ENCODE measurements at regions of chr1 and their contacts with region 1.

Region 1: DNA sequence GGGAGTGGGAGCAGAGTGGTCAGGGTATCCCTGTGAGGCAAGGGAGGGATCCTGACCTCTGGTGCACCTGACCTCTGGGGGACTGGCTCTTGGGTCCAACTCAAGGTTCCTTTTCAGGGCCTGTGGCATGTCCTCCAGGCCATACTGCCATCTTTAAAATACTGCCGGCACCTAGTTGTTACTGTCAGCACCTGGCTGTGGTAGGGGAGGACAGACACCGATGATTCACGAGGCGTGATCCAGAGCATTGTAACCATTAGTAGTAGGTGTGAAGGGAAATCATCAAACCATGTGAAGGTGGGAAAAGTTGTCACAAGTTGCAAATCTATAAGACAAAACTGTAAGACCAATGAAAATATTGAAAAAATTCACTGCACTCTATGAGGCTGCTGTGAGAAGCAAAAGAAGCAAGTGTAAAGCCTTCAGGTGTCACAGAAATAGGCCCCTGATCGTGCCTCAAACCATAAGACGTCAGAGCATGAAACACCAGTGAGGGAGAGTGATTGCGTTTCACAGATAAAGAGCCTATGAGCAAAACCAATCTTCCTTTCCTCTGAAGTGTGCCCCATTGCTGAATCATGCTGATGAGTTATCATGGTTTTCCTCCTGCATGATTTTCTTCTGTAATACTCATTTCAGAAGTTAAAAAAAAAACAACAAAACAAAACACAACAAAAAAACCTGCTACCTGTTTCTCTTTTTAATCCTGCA is 55.3 kb downstream of the CDC7 start:
- DNase-seq: peak; percentile 78
- ATAC-seq: peak; percentile 88
- H3K4me3 Mint-ChIP-seq: peak overlapping the region; percentile 60
- H3K27ac Mint-ChIP-seq: peak overlapping the region; percentile 97
- H3K4me1 Mint-ChIP-seq: peaks cover 83% of the 10 kb centered on the region
- H3K27me3 Mint-ChIP-seq: no peaks in the 10 kb centered on the region

Region 2: GRCh38 chr1:91021686-91022517 is 534.1 kb before region 1 on chr1 and contains the start of gene ZNF644:
- CTCF ChIA-PET with region 1: no interaction called
- POLR2A ChIA-PET with region 1: no interaction called
- intact Hi-C with region 1: loop called in 1 of 2 experiments (anchors 5 kb)
- DNase-seq: peak; percentile 95
- ATAC-seq: peak; percentile 90
- H3K4me3 Mint-ChIP-seq: peak within 1 kb of the TSS; percentile 94
- H3K27ac Mint-ChIP-seq: peak within 1 kb of the TSS; percentile 97
- H3K4me1 Mint-ChIP-seq: peaks cover 62% of the 10 kb centered on the region
- H3K27me3 Mint-ChIP-seq: no peaks in the 10 kb centered on the region
- total RNA-seq, gene ZNF644: 36.8 to 46.0 TPM

Region 3: DNA sequence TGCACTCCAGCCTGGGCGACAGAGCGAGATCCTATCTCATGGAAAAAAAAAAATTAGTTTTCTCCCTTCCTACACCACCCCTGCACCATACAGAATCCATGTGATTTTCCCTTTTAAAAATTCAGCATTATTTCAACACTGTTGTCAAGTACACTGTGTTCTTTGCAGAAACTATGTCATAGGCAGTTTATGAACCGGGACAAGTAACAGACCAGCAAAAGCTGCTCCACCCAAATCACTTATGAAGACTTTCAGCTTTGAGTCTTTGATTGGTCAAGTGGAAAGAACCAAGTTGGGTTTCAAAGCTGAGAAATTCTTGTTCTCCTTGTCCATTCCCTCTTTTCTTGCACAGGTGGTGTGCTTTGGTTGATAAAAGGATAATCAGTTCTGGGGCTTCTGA is 117.6 kb after region 1 on chr1:
- CTCF ChIA-PET with region 1: no interaction called
- POLR2A ChIA-PET with region 1: interaction called, 4 read pairs
- intact Hi-C with region 1: loop called (anchors 1 to 2 kb)
- DNase-seq: no peak
- ATAC-seq: no peak
- H3K4me3 Mint-ChIP-seq: no peak overlapping the region
- H3K27ac Mint-ChIP-seq: peak overlapping the region; percentile 84
- H3K4me1 Mint-ChIP-seq: peaks cover 34% of the 10 kb centered on the region
- H3K27me3 Mint-ChIP-seq: no peaks in the 10 kb centered on the region

Region 4: DNA sequence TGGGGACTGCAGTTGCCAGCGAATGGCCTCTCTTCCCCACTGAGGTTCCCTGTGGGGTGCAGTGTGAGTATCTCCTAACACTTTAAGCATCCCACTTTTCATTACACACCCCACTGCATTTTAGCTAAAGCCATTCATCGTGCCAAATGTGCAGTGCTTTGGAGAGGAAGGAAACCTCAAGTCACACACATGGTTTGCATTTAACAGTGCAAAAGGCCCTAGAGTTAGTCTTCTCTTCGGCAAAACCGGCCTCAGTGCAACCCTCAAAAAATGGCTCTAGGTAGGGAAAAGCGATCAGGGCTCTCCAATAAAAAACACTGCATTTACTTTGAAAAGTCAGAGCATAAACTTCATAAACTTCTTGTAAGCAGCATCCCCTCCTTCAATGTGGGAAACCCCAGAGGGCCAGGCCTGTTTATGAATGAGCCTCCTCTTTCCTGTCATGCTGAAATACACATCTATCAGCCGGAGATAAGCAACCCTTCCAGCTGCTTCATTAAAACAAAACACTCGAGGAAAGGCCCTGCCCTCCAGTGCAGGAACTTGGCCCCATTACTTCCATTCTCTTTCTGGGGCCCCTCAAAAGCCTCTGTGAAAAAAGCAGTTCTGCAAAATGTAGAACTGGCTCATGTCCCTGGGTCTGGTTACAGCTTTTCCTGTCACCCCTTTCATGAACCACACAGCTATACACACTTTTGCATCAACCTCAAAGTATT is 128.7 kb after region 1 on chr1:
- CTCF ChIA-PET with region 1: no interaction called
- POLR2A ChIA-PET with region 1: no interaction called
- intact Hi-C with region 1: no loop called
- DNase-seq: peak; percentile 37
- ATAC-seq: peak; percentile 79
- H3K4me3 Mint-ChIP-seq: no peak overlapping the region
- H3K27ac Mint-ChIP-seq: peak overlapping the region; percentile 72
- H3K4me1 Mint-ChIP-seq: peaks cover 25% of the 10 kb centered on the region
- H3K27me3 Mint-ChIP-seq: no peaks in the 10 kb centered on the region

Region 5: GRCh38 chr1:91732291-91733107 is 176.5 kb after region 1 on chr1:
- CTCF ChIA-PET with region 1: interaction called, 4 read pairs
- POLR2A ChIA-PET with region 1: no interaction called
- intact Hi-C with region 1: loop called (anchors 1 to 5 kb)
- DNase-seq: peak; percentile 58
- ATAC-seq: peak; percentile 47
- H3K4me3 Mint-ChIP-seq: no peak overlapping the region
- H3K27ac Mint-ChIP-seq: peak overlapping the region; percentile 89
- H3K4me1 Mint-ChIP-seq: peaks cover 48% of the 10 kb centered on the region
- H3K27me3 Mint-ChIP-seq: peaks cover 5% of the 10 kb centered on the region

Region 6: DNA sequence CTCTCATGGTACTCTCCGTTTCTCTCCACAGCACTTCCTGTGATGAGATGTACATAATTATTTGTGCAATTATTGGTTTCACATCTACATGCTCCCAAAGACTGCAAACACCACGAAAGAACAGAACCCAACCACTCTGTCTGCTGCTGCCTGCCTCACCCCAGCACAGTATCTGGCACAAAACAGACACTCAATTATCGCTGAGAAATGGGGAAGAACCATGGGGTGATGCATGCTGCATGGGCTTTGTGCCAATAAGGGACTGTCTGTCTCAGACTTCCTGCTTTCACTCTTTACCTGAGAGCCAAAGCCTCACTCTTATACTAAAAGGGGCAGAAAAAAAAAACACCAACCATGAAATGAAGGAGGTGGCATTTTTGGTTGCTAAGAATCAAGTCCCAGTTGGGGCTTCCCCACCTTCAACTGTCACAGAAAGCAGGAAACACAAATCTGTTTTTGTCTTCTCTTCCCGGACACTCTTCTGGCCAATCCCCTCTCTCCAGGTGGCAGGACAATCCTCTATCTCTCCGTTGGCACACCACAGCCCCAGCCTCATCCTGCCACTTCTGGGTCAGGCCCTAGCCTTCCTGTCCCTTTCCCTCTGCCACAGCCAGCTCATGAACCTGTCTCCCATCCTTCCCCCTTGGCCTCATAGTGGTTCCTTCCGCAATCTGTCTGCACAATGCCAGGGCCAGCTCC is 248.0 kb after region 1 on chr1:
- CTCF ChIA-PET with region 1: no interaction called
- POLR2A ChIA-PET with region 1: no interaction called
- intact Hi-C with region 1: loop called (anchors 1 kb)
- DNase-seq: peak; percentile 86
- ATAC-seq: peak; percentile 80
- H3K4me3 Mint-ChIP-seq: peak overlapping the region; percentile 56
- H3K27ac Mint-ChIP-seq: peak overlapping the region; percentile 90
- H3K4me1 Mint-ChIP-seq: peaks cover 39% of the 10 kb centered on the region
- H3K27me3 Mint-ChIP-seq: peaks cover 1% of the 10 kb centered on the region

Region 7: DNA sequence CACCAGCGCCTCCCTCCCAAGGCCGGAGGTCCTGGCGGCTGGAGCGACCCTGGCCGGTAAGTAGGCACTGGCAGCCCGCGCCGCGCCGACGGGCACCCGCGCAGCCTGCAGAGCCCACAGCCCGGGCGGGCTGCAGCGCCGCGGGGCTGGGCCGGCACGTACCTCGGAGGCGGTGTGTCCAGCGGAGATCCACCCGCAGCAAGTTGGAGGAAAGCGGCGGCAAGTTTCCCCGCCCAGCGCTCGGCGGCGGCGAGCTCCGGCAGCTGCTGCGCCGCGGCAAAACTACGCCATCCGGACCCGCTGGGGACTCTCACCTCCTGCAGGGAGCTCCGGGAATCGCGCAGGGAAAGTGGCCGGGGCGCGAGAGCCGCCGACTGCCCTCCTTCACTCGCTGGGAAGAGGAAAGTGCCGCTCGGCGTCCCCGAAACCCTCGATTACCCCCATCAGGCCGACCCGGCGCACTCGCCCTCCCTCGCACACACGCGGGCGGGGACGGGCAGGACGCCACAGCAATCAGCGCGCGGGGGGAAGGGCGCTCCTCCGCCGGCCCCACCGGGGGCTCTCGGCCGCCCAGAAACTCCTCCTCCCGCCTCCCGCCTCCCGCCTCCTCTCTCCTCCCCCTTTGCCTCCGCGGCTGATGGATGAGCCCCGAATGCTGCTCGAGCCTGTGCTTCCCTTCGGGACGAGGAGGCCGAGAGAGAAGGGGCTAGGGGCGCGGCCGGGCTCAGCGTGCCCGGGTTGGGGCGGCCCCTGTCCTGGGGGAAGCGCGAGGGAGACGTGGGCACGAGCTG is 329.9 kb after region 1 on chr1 and contains the start of gene TGFBR3:
- CTCF ChIA-PET with region 1: no interaction called
- POLR2A ChIA-PET with region 1: no interaction called
- intact Hi-C with region 1: loop called in 1 of 2 experiments (anchors 2 kb)
- DNase-seq: peak; percentile 76
- ATAC-seq: peak; percentile 70
- H3K4me3 Mint-ChIP-seq: peak within 1 kb of the TSS; percentile 87
- H3K27ac Mint-ChIP-seq: peak within 1 kb of the TSS; percentile 80
- H3K4me1 Mint-ChIP-seq: peaks cover 38% of the 10 kb centered on the region
- H3K27me3 Mint-ChIP-seq: peaks cover 16% of the 10 kb centered on the region
- total RNA-seq, gene TGFBR3: 4.2 to 4.5 TPM

Region 8: GRCh38 chr1:92583821-92584760 is 1028.1 kb after region 1 on chr1:
- CTCF ChIA-PET with region 1: no interaction called
- POLR2A ChIA-PET with region 1: no interaction called
- intact Hi-C with region 1: loop called in 1 of 2 experiments (anchors 2 kb)
- DNase-seq: no peak
- ATAC-seq: peak; percentile 60
- H3K4me3 Mint-ChIP-seq: peak overlapping the region; percentile 68
- H3K27ac Mint-ChIP-seq: peak overlapping the region; percentile 92
- H3K4me1 Mint-ChIP-seq: peaks cover 79% of the 10 kb centered on the region
- H3K27me3 Mint-ChIP-seq: no peaks in the 10 kb centered on the region